ENCODE measurements at regions of chr13 and their contacts with region 1.

Region 1: DNA sequence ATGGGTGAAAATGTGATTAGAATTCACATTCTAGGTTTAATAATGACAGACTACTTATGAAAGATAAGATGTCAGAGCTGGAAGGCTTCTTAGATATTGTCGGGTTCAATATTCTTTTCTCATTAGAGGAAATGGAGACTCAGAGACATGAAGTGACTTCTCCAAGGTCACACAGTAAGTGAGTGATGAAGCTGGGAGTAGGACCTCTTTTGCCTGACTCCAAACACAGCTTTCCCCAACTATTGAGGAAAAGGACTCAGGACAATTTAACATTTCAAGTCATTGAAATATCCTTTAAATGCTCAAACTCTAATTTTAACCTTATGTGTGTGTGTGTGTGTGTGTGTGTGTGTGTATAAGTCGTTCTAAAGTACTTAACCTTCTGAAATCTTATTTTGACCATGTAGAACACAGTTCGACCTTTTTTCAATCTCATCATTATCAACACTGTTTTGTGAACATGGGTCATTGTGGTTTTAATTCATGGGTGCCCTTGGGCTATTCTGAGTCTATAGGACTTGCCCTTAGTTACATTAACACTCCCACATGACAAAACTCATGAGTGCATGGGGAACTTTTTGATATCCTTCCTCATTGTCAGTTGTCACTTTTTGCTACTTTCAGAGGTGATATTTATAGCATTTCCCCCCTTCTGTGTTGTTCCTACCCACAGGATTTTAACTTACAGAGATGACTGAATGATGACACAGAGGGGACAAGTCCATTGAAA is 53.0 kb downstream of the LRCH1 start:
- DNase-seq: no peak
- ATAC-seq: peak; percentile 78
- H3K4me3 Mint-ChIP-seq: no peak overlapping the region
- H3K27ac Mint-ChIP-seq: peak overlapping the region; percentile 67
- H3K4me1 Mint-ChIP-seq: peaks cover 69% of the 10 kb centered on the region
- H3K27me3 Mint-ChIP-seq: no peaks in the 10 kb centered on the region
- CTCF ChIP-seq: no peak

Region 2: GRCh38 chr13:46119883-46120614 is 485.9 kb before region 1 on chr13:
- CTCF ChIA-PET with region 1: no interaction called
- POLR2A ChIA-PET with region 1: no interaction called
- intact Hi-C with region 1: no loop called
- DNase-seq: no peak
- ATAC-seq: no peak
- H3K4me3 Mint-ChIP-seq: no peak overlapping the region
- H3K27ac Mint-ChIP-seq: no peak overlapping the region
- H3K4me1 Mint-ChIP-seq: peaks cover 13% of the 10 kb centered on the region
- H3K27me3 Mint-ChIP-seq: no peaks in the 10 kb centered on the region
- CTCF ChIP-seq: no peak

Region 3: GRCh38 chr13:46648166-46648635 is 42.2 kb after region 1 on chr13:
- CTCF ChIA-PET with region 1: no interaction called
- POLR2A ChIA-PET with region 1: no interaction called
- intact Hi-C with region 1: loop called (anchors 5 kb)
- DNase-seq: peak; percentile 39
- ATAC-seq: peak; percentile 45
- H3K4me3 Mint-ChIP-seq: no peak overlapping the region
- H3K27ac Mint-ChIP-seq: no peak overlapping the region
- H3K4me1 Mint-ChIP-seq: peaks cover 48% of the 10 kb centered on the region
- H3K27me3 Mint-ChIP-seq: no peaks in the 10 kb centered on the region
- CTCF ChIP-seq: no peak

Measured in activated CD8-positive, alpha-beta T cell treated with anti-CD3 and anti-CD28 coated beads for 36 hours (primary cell).